Motor neuron (in vitro differentiated cells): ENCODE measurements at regions of chr7 and their contacts with region 1.

Region 1: GRCh38 chr7:42843205-42843800 is 68.6 kb downstream of the C7orf25 start:
- ATAC-seq: peak; percentile 59 to 97 (median 68)
- H3K4me3 ChIP-seq: no peak overlapping the region
- H3K27ac ChIP-seq: no peak overlapping the region
- H3K4me1 ChIP-seq: no peaks in the 10 kb centered on the region

Region 2: GRCh38 chr7:41940760-41941343 is 902.5 kb before region 1 on chr7:
- in situ Hi-C with region 1: loop called in 6 of 9 experiments (anchors 25 kb)
- ATAC-seq: peak; percentile 79 to 89 (median 82)
- H3K4me3 ChIP-seq: no peak overlapping the region
- H3K27ac ChIP-seq: no peak overlapping the region
- H3K4me1 ChIP-seq: no peaks in the 10 kb centered on the region

Region 3: GRCh38 chr7:41955893-41956675 is 887.2 kb before region 1 on chr7:
- in situ Hi-C with region 1: loop called in 3 of 9 experiments (anchors 25 kb)
- ATAC-seq: peak; percentile 32 to 99 (median 76)
- H3K4me3 ChIP-seq: no peak overlapping the region
- H3K27ac ChIP-seq: no peak overlapping the region
- H3K4me1 ChIP-seq: no peaks in the 10 kb centered on the region

Region 4: DNA sequence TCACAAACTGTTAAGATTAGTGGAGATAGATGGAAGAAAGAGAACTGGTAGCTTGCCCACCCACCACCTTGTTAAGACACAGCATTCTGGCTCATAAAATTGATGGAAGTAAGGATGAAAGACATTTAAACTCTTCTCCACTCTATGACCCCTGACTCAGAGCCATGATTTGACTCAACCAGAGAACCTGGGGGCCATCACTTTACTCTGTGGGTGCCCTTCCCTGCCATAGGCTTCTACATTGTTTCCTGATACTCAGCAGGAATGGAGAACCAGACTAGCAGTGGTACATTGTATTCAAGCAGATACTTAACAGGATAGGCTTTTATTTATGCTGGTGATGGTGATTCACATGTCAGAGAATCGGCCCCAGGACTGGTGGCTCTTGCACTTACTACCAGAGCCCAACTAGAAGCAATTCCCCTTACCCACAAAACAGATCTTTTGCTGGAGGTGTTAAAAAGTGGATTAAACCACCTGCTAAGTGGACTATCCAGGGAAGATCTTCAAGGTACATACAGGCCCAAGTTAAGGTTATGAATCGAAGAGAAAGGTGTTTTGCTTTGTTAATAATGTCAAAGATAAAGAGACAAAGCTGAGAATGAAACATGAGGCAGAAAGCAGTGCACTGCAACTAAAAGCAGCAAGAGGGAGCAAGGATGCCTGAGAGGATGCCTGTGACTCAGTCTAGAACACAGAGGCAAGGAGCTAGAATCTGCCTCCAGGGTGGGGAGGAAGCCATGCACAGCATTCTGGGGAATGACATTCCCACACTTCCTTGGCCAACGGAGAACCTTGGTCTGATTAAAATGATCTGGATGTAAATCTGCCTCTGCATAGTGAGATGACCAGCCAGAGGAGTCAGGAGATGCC is 570.3 kb before region 1 on chr7:
- in situ Hi-C with region 1: loop called in 1 of 9 experiments (anchors 25 kb)
- ATAC-seq: peak in 5 of 8 experiments; percentile 28 to 97 (median 94)
- H3K4me3 ChIP-seq: no peak overlapping the region
- H3K27ac ChIP-seq: no peak overlapping the region
- H3K4me1 ChIP-seq: no peaks in the 10 kb centered on the region

Region 5: DNA sequence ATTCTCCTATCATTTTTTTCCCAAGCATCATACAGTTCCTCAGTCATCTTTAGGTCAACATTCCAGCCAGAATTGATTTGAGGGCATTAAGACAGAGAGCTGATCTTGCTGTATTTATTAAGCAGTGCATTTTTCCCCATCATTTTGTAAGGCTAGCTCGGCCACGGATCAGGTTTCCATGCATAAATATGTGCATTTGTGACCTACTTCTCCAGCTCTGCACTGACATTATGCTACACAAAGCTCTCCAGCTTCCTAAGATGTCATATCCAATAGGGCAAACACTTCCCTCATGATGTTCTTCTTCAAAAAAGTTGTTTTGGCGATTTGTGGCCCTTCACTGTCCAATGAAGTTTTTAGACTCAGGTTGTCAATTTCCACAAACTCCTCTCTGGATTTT is 134.0 kb before region 1 on chr7:
- in situ Hi-C with region 1: no loop called
- ATAC-seq: peak in 3 of 8 experiments; percentile 62 to 86 (median 77)
- H3K4me3 ChIP-seq: no peak overlapping the region
- H3K27ac ChIP-seq: no peak overlapping the region
- H3K4me1 ChIP-seq: no peaks in the 10 kb centered on the region